Lower leg skin (tissue), 4 donors: ENCODE measurements at regions of chrX and their contacts with region 1.

Region 1: GRCh38 chrX:55767100-55767499 is 49.6 kb downstream of the RRAGB start:
- DNase-seq: no peak
- H3K4me3 ChIP-seq: no peak overlapping the region
- CTCF ChIP-seq: no peak
- POLR2A ChIP-seq: no peak

Region 2: DNA sequence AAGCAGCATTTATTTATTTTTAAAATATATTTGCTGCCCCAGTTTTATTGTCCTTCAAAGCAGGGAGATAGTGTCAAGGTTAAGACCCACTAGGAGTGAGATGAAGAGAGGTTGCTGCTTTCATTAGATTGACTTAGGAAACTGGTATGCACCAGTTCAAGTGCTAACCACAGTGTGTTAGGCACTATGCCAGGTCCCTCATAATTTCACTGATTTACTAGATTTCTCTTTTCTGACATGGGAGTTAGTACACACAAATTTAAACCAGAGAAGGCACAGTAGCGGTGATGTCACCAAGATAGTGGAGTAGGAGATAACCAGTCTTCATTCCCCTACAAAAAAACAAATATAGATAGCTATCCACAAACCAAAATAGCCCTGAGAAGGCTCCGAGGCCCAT is 35.3 kb before region 1 on chrX:
- intact Hi-C with region 1: loop called (anchors 1 kb)
- DNase-seq: no peak
- H3K4me3 ChIP-seq: no peak overlapping the region
- CTCF ChIP-seq: no peak
- POLR2A ChIP-seq: no peak

Region 3: GRCh38 chrX:56066016-56066415 is 298.9 kb after region 1 on chrX:
- intact Hi-C with region 1: no loop called
- DNase-seq: no peak
- H3K4me3 ChIP-seq: no peak overlapping the region
- CTCF ChIP-seq: no peak
- POLR2A ChIP-seq: no peak